Left ventricle myocardium superior (tissue), 1 donor: ENCODE measurements at regions of chrX and their contacts with region 1.

Region 1: GRCh38 chrX:2608638-2609430 is 82.3 kb upstream of the CD99 start:
- DNase-seq: peak; percentile 93
- ATAC-seq: peak; percentile 99

Region 2: GRCh38 chrX:1453951-1454785 is 1154.7 kb before region 1 on chrX:
- intact Hi-C with region 1: loop called (anchors 10 kb)
- DNase-seq: peak; percentile 92
- ATAC-seq: peak; percentile 35

Region 3: DNA sequence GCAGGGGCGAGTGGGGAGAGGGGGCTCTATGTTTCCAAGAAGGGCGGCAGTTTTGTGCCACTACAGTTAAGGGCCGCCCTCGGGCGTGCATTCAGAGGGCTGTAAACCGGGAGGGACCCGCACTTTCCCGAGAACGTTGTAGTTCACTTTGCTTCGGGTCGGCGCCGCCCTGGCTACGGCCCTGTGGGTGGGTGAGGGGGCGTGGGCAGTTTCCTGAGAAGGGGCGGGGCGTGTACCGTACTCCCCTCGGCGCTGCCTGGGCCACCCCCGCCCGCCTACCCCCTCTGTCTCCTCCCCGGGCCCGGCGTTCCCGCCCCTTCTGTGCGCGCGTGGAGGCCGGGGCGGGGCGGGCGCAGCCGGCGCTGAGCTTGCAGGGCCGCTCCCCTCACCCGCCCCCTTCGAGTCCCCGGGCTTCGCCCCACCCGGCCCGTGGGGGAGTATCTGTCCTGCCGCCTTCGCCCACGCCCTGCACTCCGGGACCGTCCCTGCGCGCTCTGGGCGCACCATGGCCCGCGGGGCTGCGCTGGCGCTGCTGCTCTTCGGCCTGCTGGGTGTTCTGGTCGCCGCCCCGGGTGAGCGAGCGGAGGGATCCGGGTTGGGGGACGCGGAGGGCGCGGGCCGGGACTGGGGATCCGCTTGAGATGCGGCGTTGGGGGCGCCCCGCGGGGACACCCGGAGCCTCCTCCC is 82.2 kb after region 1 on chrX and contains the start of gene CD99:
- intact Hi-C with region 1: no loop called
- DNase-seq: peak; percentile 97
- ATAC-seq: peak; percentile 95
- total RNA-seq, gene CD99: 360 TPM